A549 (cell line): ENCODE measurements at regions of chr18 and their contacts with region 1.

Region 1: GRCh38 chr18:47100214-47100831 is 50.0 kb downstream of the HDHD2 start:
- DNase-seq: peak; percentile 22 to 31
- ATAC-seq: peak; percentile 77 to 86; a peak in 5 of 6 replicates
- H3K4me3 ChIP-seq: no peak overlapping the region
- H3K27ac ChIP-seq: no peak overlapping the region
- H3K4me1 ChIP-seq: no peaks in the 10 kb centered on the region
- CTCF ChIP-seq: peak; percentile 66
- EP300 ChIP-seq: no peak
- POLR2A ChIP-seq: no peak
- RAD21 ChIP-seq: peak; percentile 63 to 64

Region 2: DNA sequence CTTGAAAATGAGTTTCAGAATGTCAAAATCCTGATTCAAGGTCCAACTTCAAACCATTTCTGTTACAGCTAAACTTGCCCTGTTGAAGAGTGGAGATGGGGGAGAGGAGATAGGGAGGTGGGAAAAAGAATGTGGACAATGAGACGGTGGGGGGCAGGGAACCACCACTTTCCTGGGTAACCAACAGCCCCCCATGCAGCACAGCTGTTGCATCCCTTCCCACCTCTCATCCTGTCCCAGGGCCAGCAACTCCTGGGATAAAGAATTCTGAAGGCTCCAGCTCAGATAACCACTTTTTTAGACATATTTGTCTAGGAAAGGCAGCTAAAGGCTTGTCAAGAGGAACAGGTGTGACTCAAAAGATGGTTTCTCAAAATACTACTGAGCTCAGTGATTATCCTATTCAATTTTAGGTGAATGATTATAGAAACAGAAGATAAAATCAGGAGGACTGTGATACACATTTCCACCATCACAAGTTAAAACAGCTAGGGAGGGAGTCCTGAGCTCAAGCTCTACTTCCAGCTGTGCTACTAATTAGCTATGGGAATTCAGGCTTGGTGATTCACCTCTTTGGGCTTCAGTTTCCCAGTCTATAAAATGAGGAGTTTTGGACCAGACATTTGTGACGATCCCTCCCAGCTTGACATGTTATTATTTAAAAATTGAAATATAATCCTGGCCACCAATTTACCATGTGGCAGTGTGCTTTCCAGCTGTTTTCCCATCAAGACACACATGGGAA is 13.6 kb after region 1 on chr18:
- CTCF ChIA-PET with region 1: interaction called, 12 read pairs
- POLR2A ChIA-PET with region 1: no interaction called
- DNase-seq: no peak
- ATAC-seq: no peak
- H3K4me3 ChIP-seq: no peak overlapping the region
- H3K27ac ChIP-seq: no peak overlapping the region
- H3K4me1 ChIP-seq: no peaks in the 10 kb centered on the region
- CTCF ChIP-seq: no peak
- EP300 ChIP-seq: no peak
- POLR2A ChIP-seq: no peak
- RAD21 ChIP-seq: no peak

Region 3: DNA sequence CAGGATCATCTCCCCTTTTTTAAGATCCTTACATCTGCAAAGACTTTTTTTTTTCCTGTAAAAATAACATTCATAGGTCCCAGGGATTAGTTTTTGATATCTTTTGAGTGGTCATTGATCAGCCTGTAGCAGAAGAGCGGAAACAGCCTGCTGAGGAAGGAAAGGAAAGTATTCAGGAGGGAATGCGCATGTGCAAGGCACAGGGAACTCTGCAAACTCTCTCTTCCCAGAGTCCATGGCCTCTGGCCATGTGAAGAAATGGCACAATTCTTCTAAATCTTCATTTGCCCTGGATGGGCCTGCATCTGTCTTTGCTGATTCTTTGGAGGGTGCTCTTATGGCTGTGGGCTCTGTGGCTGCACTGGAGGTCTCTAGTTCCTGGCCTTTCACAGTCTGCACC is 211.3 kb after region 1 on chr18:
- CTCF ChIA-PET with region 1: no interaction called
- POLR2A ChIA-PET with region 1: no interaction called
- DNase-seq: no peak
- ATAC-seq: no peak
- H3K4me3 ChIP-seq: no peak overlapping the region
- H3K27ac ChIP-seq: no peak overlapping the region
- H3K4me1 ChIP-seq: no peaks in the 10 kb centered on the region
- CTCF ChIP-seq: no peak
- EP300 ChIP-seq: no peak
- POLR2A ChIP-seq: no peak
- RAD21 ChIP-seq: no peak